ENCODE measurements at regions of chr11 and their contacts with region 1.

Region 1: GRCh38 chr11:61187505-61188130 is 15.7 kb upstream of the PGA3 start:
- DNase-seq: peak; percentile 56 to 70
- H3K4me3 ChIP-seq: no peak overlapping the region
- H3K27ac ChIP-seq: no peak overlapping the region
- H3K4me1 ChIP-seq: no peaks in the 10 kb centered on the region
- H3K27me3 ChIP-seq: peaks cover 26% of the 10 kb centered on the region
- CTCF ChIP-seq: peak; percentile 99

Region 2: GRCh38 chr11:60906132-60906972 is 281.3 kb before region 1 on chr11 and contains the start of gene PRPF19:
- CTCF ChIA-PET with region 1: no interaction called
- POLR2A ChIA-PET with region 1: no interaction called
- intact Hi-C with region 1: loop called (anchors 2 kb)
- DNase-seq: peak; percentile 94 to 99
- H3K4me3 ChIP-seq: peak within 1 kb of the TSS; percentile 90
- H3K27ac ChIP-seq: peak within 1 kb of the TSS; percentile 81
- H3K4me1 ChIP-seq: peaks cover 23% of the 10 kb centered on the region
- H3K27me3 ChIP-seq: peaks cover 27% of the 10 kb centered on the region; the same call in 1 of the 2 replicates
- CTCF ChIP-seq: no peak
- total RNA-seq, gene PRPF19: 135 and 160 TPM in 2 replicates

Region 3: DNA sequence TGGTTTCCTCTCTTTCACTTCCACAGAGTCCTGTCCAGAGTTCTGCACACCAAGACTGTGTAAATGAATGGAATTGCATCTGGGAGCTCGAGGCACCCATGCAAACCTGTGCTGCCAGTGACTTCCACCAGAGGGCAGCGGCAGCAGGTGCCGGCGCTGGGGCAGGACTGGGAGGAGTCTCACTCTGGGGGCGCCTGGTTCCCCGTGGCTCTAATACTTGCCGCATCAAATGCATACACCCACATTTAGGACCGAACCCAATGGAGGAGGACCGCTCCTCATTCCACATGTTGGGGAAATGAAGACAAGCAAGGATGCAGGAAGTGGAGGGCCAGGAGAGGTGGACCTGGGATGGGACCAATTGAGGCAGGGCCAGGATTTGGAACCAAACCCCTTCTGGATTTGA is 217.2 kb before region 1 on chr11:
- CTCF ChIA-PET with region 1: no interaction called
- POLR2A ChIA-PET with region 1: no interaction called
- intact Hi-C with region 1: loop called (anchors 1 kb)
- DNase-seq: peak in 1 of 2 experiments; percentile 69
- H3K4me3 ChIP-seq: no peak overlapping the region
- H3K27ac ChIP-seq: no peak overlapping the region
- H3K4me1 ChIP-seq: no peaks in the 10 kb centered on the region
- H3K27me3 ChIP-seq: peaks cover 14% of the 10 kb centered on the region
- CTCF ChIP-seq: peak; percentile 94

Region 4: DNA sequence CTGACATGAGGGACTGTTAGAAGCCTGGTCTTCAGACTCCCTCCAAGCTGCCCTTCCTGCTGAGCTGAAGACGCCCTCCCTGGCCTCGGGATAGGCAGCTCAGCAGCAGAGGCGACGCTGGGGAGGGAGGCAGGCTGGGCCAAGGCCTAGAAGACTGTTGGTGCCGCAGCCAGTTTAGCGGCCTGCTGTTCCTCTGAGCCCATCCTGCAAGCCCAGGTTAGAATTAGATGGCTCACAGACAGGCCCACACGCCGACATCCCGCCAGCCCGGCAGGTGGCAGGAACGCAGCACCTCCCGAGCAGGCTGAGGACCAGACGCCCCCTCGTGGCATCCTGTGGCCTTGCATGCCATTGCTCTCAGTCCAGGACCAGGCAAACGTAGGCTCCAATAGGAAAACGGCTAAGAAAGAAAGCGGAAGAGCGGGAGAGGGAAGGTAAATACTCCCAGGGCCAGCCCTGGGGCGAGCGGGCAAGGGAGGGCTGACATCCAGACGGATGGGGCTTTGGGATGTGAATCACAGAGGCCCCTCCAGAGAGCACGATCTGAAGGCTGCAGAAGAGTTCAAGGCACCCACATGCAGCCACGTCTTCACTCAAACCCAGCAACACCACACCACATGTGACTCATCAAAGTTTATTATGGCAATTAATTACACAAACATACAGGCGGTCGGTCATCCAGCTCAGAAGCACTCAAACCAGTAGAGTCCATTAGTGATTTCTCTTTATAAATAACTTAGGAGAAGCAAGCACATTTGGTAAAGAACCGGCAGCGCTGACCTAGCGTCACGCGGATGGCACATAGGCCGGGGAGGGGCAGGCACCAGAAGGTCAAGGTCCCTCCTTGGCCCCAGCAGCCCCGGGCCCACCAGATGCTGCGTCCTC is 57.7 kb before region 1 on chr11:
- CTCF ChIA-PET with region 1: no interaction called
- POLR2A ChIA-PET with region 1: no interaction called
- intact Hi-C with region 1: loop called (anchors 1 kb)
- DNase-seq: peak; percentile 85 to 93
- H3K4me3 ChIP-seq: peak overlapping the region; percentile 37; the same call in 1 of the 2 replicates
- H3K27ac ChIP-seq: peak overlapping the region; percentile 40
- H3K4me1 ChIP-seq: peaks cover 19% of the 10 kb centered on the region
- H3K27me3 ChIP-seq: no peaks in the 10 kb centered on the region
- CTCF ChIP-seq: peak; percentile 100

Region 5: DNA sequence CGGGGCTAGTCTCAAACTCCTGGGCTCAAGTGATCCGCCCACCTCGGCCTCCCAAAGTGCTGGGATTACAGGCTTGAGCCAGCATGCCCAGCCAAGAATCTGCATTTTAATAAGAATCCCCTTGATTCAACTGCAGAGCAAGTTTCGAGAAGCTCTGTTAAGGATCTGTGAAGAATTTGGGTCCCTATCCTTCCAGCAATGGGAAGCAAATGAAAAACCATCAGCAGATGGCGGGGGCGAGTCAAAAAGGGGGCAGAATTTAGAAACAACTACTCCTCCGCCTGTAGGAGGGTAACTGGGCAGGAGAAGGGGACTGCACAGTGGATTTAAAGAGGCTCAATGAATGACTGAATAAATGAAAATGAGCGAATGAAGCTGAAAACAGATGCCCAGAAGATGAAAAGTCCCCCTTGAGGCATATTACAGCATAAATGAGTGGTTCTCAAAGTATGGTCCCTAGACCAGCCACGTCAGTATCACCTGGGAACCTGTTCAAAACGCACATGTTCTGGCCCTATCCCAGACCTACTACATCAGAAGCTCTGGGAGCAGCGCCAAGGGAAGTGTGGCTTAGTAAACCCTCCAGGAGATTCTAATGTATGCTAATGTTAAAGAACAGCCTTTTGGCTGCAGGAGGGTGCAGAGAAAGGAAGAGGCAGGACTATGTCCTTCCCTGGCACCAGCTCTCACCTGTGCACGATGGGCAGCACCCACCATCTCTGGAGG is 92.5 kb after region 1 on chr11:
- CTCF ChIA-PET with region 1: no interaction called
- POLR2A ChIA-PET with region 1: no interaction called
- intact Hi-C with region 1: no loop called
- DNase-seq: no peak
- H3K4me3 ChIP-seq: no peak overlapping the region
- H3K27ac ChIP-seq: no peak overlapping the region
- H3K4me1 ChIP-seq: no peaks in the 10 kb centered on the region
- H3K27me3 ChIP-seq: peaks cover 32% of the 10 kb centered on the region
- CTCF ChIP-seq: no peak

Measured in PC-9 (cell line).